Head of caudate nucleus (tissue), 42 donors: ENCODE measurements at regions of chr2 and their contacts with region 1.

Region 1: GRCh38 chr2:18749912-18750526 is 160.7 kb upstream of the NT5C1B start:
- DNase-seq: peak in 40 of 42 donors; percentile 16 to 88 (median 66)

Region 2: GRCh38 chr2:18482666-18483065 is 267.4 kb before region 1 on chr2:
- intact Hi-C with region 1: no loop called
- DNase-seq: no peak

Region 3: DNA sequence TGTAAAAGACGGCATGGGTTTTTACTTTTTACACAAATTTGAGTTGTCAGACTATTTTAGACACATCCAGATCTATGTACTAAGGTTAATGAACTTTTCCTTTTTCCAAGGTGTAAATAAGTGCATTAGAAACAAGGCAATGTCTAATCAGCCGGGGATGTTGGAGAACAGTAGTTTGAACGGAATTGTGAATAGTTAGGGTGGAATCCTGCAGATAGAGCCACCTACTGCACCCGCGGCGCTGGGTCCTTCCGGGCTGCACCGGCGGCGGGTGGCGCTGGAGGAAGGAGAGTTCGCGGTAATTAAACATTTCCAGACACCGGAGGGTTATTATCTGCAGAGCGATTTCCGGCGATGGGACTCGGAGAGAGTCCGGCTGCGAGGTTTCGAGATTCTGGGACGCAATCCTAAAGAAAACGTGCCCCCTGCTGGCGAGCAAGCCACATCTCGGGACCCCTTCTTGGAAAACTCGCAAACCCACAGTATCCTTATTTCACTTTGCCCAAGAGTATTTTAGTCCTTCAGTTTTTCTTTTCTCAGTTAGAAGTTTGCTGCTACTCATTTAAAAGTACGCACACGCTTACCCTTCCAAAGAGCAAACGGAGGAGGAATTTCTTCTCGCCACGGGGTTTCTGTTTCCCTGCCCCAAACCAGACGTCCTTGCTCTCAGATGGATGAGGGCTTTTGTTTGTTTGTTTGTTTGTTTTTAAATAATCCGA is 612.9 kb after region 1 on chr2:
- intact Hi-C with region 1: loop called (anchors 5 kb)
- DNase-seq: peak; percentile 42 to 93 (median 76)